Pancreas (tissue), 10 donors: ENCODE measurements at regions of chr4 and their contacts with region 1.

Region 1: GRCh38 chr4:6087673-6088341 is 69.6 kb upstream of the C4orf50 start:
- DNase-seq: peak in 2 of 6 donors; percentile 22
- ATAC-seq: peak in 3 of 4 donors; percentile 63 to 74 (median 71)
- H3K4me3 ChIP-seq: no peak overlapping the region
- H3K27ac ChIP-seq: no peak overlapping the region
- H3K4me1 ChIP-seq: no peaks in the 10 kb centered on the region
- H3K27me3 ChIP-seq: no peaks in the 10 kb centered on the region
- CTCF ChIP-seq: peak in 3 of 4 donors; percentile 12 to 14 (median 13)

Region 2: DNA sequence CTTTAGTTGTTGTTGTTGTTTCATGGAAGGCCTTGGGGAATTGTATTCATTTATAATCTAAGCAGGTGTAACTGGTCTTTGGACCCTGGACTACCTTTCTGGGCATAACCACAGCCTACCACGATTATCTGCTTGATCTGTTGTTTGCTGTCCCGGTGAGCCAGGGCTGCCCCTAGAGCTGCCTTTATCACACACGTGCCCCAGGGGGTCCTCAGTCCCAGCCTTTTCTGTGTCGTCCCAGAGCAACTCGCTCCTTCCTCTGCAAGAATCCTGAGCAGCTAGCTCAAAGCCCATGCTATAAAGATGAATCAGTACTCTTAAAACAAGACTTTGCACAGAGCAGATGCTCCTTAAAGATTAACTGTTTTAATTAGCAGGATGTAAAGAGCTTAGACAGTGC is 652.6 kb before region 1 on chr4:
- intact Hi-C with region 1: no loop called
- DNase-seq: no peak
- ATAC-seq: no peak
- H3K4me3 ChIP-seq: no peak overlapping the region
- H3K27ac ChIP-seq: no peak overlapping the region
- H3K4me1 ChIP-seq: no peaks in the 10 kb centered on the region
- H3K27me3 ChIP-seq: no peaks in the 10 kb centered on the region
- CTCF ChIP-seq: no peak

Region 3: GRCh38 chr4:6008092-6008551 is 79.7 kb before region 1 on chr4:
- intact Hi-C with region 1: loop called in 1 of 3 experiments (anchors 10 kb)
- DNase-seq: peak in 1 of 6 donors; percentile 49
- ATAC-seq: peak in 1 of 4 donors; percentile 17
- H3K4me3 ChIP-seq: no peak overlapping the region
- H3K27ac ChIP-seq: no peak overlapping the region
- H3K4me1 ChIP-seq: no peaks in the 10 kb centered on the region
- H3K27me3 ChIP-seq: peaks cover 0 to 14% (median 0%) of the 10 kb centered on the region in 4 donors
- CTCF ChIP-seq: no peak

Region 4: DNA sequence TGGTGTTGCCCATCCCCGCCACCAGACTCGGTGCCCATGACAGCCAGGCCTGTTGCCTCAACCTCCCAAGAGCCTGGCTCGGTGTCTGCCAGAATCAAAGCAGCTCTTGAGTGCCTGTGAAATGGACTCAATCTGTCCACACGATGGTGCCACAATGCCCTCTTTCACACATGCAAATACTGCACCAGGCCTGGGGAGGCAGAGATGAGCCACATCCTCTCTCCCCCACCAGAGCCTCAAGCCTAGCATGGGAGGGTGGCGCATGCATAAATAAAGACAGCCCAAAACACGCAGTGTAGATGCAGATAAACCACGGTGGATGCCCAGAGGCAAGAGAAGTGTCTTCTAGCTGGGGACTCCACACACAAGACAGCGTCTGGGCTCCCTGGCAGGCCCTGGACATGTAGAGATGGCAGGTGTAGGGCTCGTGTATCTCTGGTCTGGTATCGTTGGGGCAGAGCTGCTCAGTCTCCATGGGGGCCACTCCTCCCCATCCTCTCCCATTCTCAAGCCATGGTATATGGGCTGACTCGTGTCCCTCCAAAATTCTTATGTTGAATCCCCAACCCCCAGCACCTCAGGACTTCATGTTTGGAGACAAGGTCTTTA is 46.9 kb after region 1 on chr4:
- intact Hi-C with region 1: no loop called
- DNase-seq: peak in 1 of 6 donors; percentile 13
- ATAC-seq: no peak
- H3K4me3 ChIP-seq: no peak overlapping the region
- H3K27ac ChIP-seq: no peak overlapping the region
- H3K4me1 ChIP-seq: no peaks in the 10 kb centered on the region
- H3K27me3 ChIP-seq: no peaks in the 10 kb centered on the region
- CTCF ChIP-seq: no peak